ENCODE measurements at regions of chr14 and their contacts with region 1.

Region 1: DNA sequence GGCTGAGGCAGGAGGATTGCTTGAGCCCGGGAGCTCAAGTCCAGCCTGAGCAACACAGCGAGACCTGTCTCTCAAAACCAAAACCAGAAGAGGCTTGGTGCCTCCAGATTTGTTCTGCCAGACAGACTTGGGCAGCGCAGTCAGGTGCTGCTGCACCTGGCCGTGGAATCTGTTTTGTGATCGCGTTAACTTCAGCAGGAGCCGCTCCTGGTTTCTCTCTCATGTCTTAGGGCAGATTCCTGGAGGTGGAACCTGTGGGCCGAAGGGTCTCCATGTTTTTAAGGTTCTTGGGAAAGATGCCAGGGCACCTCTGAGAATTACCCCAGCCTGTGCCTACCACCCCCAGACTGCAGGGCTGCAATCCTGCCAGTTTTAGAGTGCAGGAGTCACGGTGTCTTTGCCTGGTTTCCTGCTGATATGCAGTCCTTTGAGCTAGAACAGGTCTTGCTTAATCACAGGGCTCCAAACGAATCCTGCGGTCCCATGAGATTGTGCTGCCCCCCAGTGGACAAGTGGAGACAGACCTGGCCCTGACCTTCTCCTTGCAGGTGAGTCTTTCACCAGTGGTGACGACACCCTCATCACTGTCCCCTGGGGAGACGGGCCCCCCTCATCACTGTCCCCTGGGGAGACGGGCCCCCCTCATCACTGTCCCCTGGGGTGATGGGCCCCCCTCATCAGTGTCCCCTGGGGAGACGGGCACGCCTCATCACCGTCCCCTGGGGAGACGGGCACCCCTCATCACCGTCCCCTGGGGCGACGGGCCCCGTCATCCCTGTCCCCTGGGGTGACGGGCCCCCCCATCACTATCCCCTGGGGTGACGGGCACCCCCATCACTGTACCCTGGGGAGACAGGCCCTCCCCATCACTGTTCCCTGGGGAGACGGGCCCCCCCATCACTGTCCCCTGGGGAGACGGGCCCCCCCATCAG is 37.6 kb downstream of the PACS2 start:
- DNase-seq: peak; percentile 94
- ATAC-seq: peak; percentile 99
- H3K4me3 Mint-ChIP-seq: no peak overlapping the region
- H3K27ac Mint-ChIP-seq: no peak overlapping the region
- H3K4me1 Mint-ChIP-seq: peaks cover 2% of the 10 kb centered on the region
- H3K27me3 Mint-ChIP-seq: no peaks in the 10 kb centered on the region

Region 2: GRCh38 chr14:104689109-104689880 is 662.9 kb before region 1 on chr14 and contains the start of gene INF2:
- CTCF ChIA-PET with region 1: no interaction called
- POLR2A ChIA-PET with region 1: no interaction called
- intact Hi-C with region 1: no loop called
- DNase-seq: peak; percentile 73
- ATAC-seq: peak; percentile 69
- H3K4me3 Mint-ChIP-seq: peak within 1 kb of the TSS; percentile 72
- H3K27ac Mint-ChIP-seq: peak within 1 kb of the TSS; percentile 60
- H3K4me1 Mint-ChIP-seq: peaks cover 34% of the 10 kb centered on the region
- H3K27me3 Mint-ChIP-seq: no peaks in the 10 kb centered on the region
- total RNA-seq, gene INF2: 60.8 to 66.0 TPM

Region 3: GRCh38 chr14:104932676-104933631 is 419.2 kb before region 1 on chr14:
- CTCF ChIA-PET with region 1: interaction called, 3 read pairs
- POLR2A ChIA-PET with region 1: no interaction called
- intact Hi-C with region 1: loop called in 1 of 2 experiments (anchors 1 kb)
- DNase-seq: peak; percentile 93
- ATAC-seq: peak; percentile 96
- H3K4me3 Mint-ChIP-seq: peak overlapping the region; percentile 32
- H3K27ac Mint-ChIP-seq: no peak overlapping the region
- H3K4me1 Mint-ChIP-seq: no peaks in the 10 kb centered on the region
- H3K27me3 Mint-ChIP-seq: peaks cover 8% of the 10 kb centered on the region

Region 4: DNA sequence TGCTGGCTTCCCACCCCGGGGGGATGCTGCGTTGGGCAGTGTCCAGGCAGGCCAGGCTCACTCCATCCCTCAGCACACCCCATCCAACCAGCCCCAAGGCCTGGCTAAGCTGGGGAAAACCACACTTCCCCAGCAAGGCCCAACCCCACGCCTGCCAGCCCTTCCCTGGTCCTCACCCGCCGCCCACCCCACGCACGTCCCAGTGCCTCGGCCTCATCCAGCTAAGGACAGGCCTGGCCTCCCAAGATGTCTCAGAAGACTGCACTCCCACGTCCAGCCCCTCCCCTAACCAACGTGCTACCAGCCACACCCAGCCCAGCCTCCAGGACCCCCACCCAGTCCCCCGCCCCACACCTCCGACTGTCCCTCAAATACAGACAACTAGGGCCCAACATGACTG is 193.4 kb before region 1 on chr14:
- CTCF ChIA-PET with region 1: no interaction called
- POLR2A ChIA-PET with region 1: no interaction called
- intact Hi-C with region 1: no loop called
- DNase-seq: no peak
- ATAC-seq: no peak
- H3K4me3 Mint-ChIP-seq: no peak overlapping the region
- H3K27ac Mint-ChIP-seq: no peak overlapping the region
- H3K4me1 Mint-ChIP-seq: no peaks in the 10 kb centered on the region
- H3K27me3 Mint-ChIP-seq: no peaks in the 10 kb centered on the region

Region 5: GRCh38 chr14:105168979-105169507 is 183.1 kb before region 1 on chr14:
- CTCF ChIA-PET with region 1: interaction called, 5 read pairs
- POLR2A ChIA-PET with region 1: no interaction called
- intact Hi-C with region 1: loop called in 1 of 2 experiments (anchors 1 kb)
- DNase-seq: peak; percentile 69
- ATAC-seq: peak; percentile 55
- H3K4me3 Mint-ChIP-seq: peak overlapping the region; percentile 53
- H3K27ac Mint-ChIP-seq: no peak overlapping the region
- H3K4me1 Mint-ChIP-seq: peaks cover 4% of the 10 kb centered on the region
- H3K27me3 Mint-ChIP-seq: peaks cover 6% of the 10 kb centered on the region

Region 6: GRCh38 chr14:105203057-105203531 is 149.1 kb before region 1 on chr14:
- CTCF ChIA-PET with region 1: interaction called, 7 read pairs
- POLR2A ChIA-PET with region 1: no interaction called
- intact Hi-C with region 1: loop called (anchors 1 kb)
- DNase-seq: peak; percentile 78
- ATAC-seq: peak; percentile 52
- H3K4me3 Mint-ChIP-seq: no peak overlapping the region
- H3K27ac Mint-ChIP-seq: no peak overlapping the region
- H3K4me1 Mint-ChIP-seq: peaks cover 7% of the 10 kb centered on the region
- H3K27me3 Mint-ChIP-seq: peaks cover 14% of the 10 kb centered on the region

Region 7: GRCh38 chr14:105267820-105268548 is 84.2 kb before region 1 on chr14:
- CTCF ChIA-PET with region 1: no interaction called
- POLR2A ChIA-PET with region 1: no interaction called
- intact Hi-C with region 1: loop called in 1 of 2 experiments (anchors 5 kb)
- DNase-seq: no peak
- ATAC-seq: no peak
- H3K4me3 Mint-ChIP-seq: no peak overlapping the region
- H3K27ac Mint-ChIP-seq: no peak overlapping the region
- H3K4me1 Mint-ChIP-seq: no peaks in the 10 kb centered on the region
- H3K27me3 Mint-ChIP-seq: no peaks in the 10 kb centered on the region

Region 8: GRCh38 chr14:105294142-105294597 is 58.0 kb before region 1 on chr14:
- CTCF ChIA-PET with region 1: interaction called, 3 read pairs
- POLR2A ChIA-PET with region 1: no interaction called
- intact Hi-C with region 1: loop called in 1 of 2 experiments (anchors 5 kb)
- DNase-seq: peak; percentile 92
- ATAC-seq: peak; percentile 95
- H3K4me3 Mint-ChIP-seq: peak overlapping the region; percentile 56
- H3K27ac Mint-ChIP-seq: peak overlapping the region; percentile 90
- H3K4me1 Mint-ChIP-seq: peaks cover 54% of the 10 kb centered on the region
- H3K27me3 Mint-ChIP-seq: no peaks in the 10 kb centered on the region

Region 9: DNA sequence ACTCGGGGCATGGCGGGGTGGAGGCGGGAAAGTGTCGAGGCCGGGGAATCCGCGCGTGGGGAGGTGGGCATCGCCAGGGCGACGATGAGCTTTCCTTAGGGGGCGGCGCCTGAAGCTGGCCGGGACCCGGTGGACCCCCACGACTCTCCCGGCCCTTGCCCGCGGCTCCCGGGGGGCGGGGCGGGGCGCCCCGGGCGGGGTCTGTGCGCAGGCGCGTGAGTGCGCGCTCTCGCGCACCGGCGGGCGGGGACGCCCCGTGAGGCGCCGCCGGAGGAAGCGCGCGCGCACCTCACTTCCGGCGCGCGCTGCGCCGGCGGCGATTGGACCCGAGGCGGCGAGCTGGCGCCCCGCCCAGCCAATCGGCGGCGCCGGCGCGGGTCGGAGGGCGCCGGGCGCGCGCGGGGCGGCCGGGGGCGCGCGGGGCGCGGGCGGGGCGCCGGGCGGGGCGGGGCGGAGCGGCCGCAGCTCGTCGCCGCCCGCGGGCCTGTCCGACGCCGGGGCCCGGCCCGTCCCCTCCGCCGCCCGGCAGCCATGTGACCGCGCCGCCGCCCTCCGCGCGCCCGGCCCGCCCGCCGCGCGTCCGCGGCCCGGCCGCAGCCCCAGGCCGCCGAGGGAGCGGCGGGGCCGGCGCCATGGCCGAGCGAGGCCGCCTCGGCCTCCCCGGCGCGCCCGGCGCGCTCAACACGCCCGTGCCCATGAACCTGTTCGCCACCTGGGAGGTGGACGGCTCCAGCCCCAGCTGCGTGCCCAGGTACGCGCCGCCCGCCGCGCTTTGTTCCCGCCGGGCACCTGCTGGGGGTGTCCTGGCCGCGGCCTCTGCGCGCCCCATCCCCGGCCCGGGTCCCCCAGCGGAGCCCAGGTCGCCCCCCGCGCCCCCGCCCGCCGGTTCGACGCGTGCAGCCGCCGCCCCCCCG is 37.6 kb before region 1 on chr14 and contains the start of gene PACS2:
- CTCF ChIA-PET with region 1: interaction called, 4 read pairs
- POLR2A ChIA-PET with region 1: interaction called, 3 read pairs
- intact Hi-C with region 1: loop called in 1 of 2 experiments (anchors 2 kb)
- DNase-seq: peak; percentile 86
- ATAC-seq: peak; percentile 79
- H3K4me3 Mint-ChIP-seq: peak within 1 kb of the TSS; percentile 84
- H3K27ac Mint-ChIP-seq: peak within 1 kb of the TSS; percentile 71
- H3K4me1 Mint-ChIP-seq: peaks cover 30% of the 10 kb centered on the region
- H3K27me3 Mint-ChIP-seq: no peaks in the 10 kb centered on the region
- total RNA-seq, gene PACS2: 30.6 to 32.9 TPM

Region 10: GRCh38 chr14:106605548-106606448 is 1253.6 kb after region 1 on chr14:
- CTCF ChIA-PET with region 1: no interaction called
- POLR2A ChIA-PET with region 1: no interaction called
- intact Hi-C with region 1: no loop called
- DNase-seq: peak; percentile 93
- ATAC-seq: peak; percentile 99
- H3K4me3 Mint-ChIP-seq: no peak overlapping the region
- H3K27ac Mint-ChIP-seq: no peak overlapping the region
- H3K4me1 Mint-ChIP-seq: peaks cover 3% of the 10 kb centered on the region
- H3K27me3 Mint-ChIP-seq: peaks cover 44% of the 10 kb centered on the region

Region 11: DNA sequence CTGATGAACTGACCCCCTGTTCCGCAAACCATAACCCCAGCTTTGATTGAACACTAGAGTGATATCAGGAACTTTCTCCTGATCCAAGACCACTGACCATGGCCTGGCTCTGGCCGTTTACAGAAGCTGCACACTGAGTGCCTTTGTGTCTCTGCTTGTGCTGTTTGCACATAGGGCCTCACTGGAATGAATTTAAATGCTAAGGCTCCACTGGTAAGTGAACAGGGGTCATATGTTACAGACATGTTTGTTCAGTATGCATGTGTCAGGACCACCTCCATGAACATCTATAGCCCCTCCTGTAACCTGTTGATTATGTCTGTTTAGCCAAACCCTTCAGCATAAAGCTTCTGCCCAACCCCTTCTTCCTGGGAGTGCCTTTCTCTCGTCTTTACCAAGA is 1414.0 kb after region 1 on chr14:
- CTCF ChIA-PET with region 1: no interaction called
- POLR2A ChIA-PET with region 1: no interaction called
- intact Hi-C with region 1: no loop called
- DNase-seq: no peak
- ATAC-seq: no peak
- H3K4me3 Mint-ChIP-seq: no peak overlapping the region
- H3K27ac Mint-ChIP-seq: peak overlapping the region; percentile 29
- H3K4me1 Mint-ChIP-seq: peaks cover 32% of the 10 kb centered on the region
- H3K27me3 Mint-ChIP-seq: no peaks in the 10 kb centered on the region

Measured in activated CD4-positive, alpha-beta T cell treated with anti-CD3 and anti-CD28 coated beads for 36 hours (primary cell).